MCF 10A (cell line): ENCODE measurements at regions of chr2 and their contacts with region 1.

Region 1: GRCh38 chr2:31429759-31430438 is 15.4 kb upstream of the XDH start:
- DNase-seq: peak; percentile 95
- H3K4me3 Mint-ChIP-seq: peak overlapping the region; percentile 4
- H3K27ac Mint-ChIP-seq: peak overlapping the region; percentile 49
- H3K4me1 Mint-ChIP-seq: peaks cover 19% of the 10 kb centered on the region
- H3K27me3 Mint-ChIP-seq: no peaks in the 10 kb centered on the region
- CTCF ChIP-seq: no peak

Region 2: GRCh38 chr2:31390324-31390723 is 39.6 kb before region 1 on chr2:
- CTCF ChIA-PET with region 1: interaction called, 3 read pairs
- POLR2A ChIA-PET with region 1: interaction called, 3 read pairs
- intact Hi-C with region 1: loop called (anchors 2 kb)
- DNase-seq: peak; percentile 94
- H3K4me3 Mint-ChIP-seq: peak overlapping the region; percentile 4
- H3K27ac Mint-ChIP-seq: peak overlapping the region; percentile 82
- H3K4me1 Mint-ChIP-seq: peaks cover 32% of the 10 kb centered on the region
- H3K27me3 Mint-ChIP-seq: no peaks in the 10 kb centered on the region
- CTCF ChIP-seq: no peak